ENCODE measurements at regions of chr19 and their contacts with region 1.

Region 1: DNA sequence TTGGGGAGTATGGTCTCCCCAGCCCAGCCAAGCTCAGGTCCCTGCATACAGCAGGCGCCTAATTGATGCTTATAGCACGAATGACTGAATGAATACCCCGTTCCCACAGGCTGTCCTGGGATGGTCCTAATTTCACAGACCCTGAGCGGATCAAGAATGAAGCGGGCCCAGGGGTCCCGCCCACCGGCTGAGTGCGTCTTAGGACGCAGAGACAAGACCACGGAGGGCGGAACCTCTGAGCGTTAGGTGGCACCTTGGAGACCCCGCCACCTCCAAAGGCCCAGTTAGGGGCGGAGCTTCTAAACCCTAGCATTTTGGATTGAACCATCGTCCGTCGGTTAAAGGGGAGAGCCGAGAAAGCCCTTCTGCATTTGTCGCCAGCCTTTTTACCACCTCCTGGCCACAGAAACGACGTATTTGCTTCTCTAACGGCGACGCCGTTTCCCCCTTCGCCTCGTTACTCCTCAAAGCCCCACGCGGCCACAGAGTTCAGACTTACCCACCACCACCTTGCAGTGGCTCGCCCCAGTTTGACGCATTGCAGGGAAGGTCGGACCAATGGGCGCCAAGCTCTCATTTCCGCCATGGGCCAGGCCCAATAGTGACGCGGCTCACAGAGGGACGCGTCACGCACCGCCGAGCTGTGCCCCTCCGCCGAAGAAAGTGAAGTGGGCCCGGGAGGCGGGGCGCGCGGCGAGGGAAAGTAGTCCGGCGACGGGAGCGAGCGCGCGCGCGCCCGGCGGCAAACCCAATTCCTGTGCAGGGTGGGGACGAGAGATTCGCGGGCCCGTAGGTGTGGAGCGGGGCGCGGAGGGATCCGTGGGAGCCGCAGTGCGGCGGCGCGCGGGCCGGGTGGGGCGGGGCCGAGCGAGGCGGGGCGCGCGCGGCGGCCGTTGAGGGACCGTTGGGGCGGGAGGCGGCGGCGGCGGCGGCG is 479 bp upstream of the CALM3 start:
- DNase-seq: peak; percentile 93 to 100 (median 98)
- ATAC-seq: peak; percentile 85
- H3K4me3 Mint-ChIP-seq: peak overlapping the region; percentile 95 to 100 (median 98)
- H3K27ac Mint-ChIP-seq: peak overlapping the region; percentile 100
- H3K4me1 Mint-ChIP-seq: peaks cover 22 to 60% (median 35%) of the 10 kb centered on the region in 4 donors
- H3K27me3 Mint-ChIP-seq: peaks cover 0 to 2% (median 0%) of the 10 kb centered on the region in 5 donors

Region 2: DNA sequence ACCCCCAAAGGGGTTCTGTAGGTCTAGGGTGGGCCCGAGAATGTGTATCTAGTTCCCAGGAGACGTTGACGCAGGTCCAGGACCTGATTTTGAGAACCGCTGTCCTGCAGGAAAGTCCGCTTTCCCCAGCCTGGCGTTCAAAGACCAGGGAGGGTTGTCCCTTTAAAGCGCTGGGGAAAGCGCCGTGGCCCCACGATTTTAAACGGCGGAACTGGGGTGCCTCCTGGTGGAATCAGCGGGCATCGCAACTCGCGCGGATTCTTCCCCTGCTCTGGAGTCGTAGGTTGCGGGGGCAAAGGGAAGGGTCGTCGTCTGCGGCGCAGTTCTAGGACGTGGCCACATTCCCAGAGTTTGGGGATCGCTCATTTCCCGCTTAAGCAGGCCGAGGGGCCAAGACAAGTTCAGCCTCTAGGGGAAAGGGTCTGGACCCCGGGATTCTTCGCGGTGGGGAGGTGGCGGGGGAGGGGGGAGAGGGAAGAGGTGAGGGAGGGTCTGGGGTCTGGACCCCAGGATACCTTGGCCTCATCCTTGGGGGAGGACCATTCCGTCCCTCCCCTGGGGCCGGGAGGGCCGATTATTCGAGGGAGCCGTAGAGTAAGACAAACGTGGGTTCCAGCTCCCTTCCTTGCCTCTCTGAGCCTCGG is 112.7 kb before region 1 on chr19:
- POLR2A ChIA-PET with region 1: no interaction called
- DNase-seq: peak; percentile 56 to 82 (median 74)
- ATAC-seq: peak; percentile 71 to 81
- H3K4me3 Mint-ChIP-seq: peak overlapping the region in 2 of 10 donors; percentile 31 to 47
- H3K27ac Mint-ChIP-seq: peak overlapping the region in 2 of 10 donors; percentile 19 to 57
- H3K4me1 Mint-ChIP-seq: peaks cover 15 to 57% (median 34%) of the 10 kb centered on the region in 4 donors
- H3K27me3 Mint-ChIP-seq: peaks cover 44 to 80% (median 62%) of the 10 kb centered on the region in 5 donors

Region 3: DNA sequence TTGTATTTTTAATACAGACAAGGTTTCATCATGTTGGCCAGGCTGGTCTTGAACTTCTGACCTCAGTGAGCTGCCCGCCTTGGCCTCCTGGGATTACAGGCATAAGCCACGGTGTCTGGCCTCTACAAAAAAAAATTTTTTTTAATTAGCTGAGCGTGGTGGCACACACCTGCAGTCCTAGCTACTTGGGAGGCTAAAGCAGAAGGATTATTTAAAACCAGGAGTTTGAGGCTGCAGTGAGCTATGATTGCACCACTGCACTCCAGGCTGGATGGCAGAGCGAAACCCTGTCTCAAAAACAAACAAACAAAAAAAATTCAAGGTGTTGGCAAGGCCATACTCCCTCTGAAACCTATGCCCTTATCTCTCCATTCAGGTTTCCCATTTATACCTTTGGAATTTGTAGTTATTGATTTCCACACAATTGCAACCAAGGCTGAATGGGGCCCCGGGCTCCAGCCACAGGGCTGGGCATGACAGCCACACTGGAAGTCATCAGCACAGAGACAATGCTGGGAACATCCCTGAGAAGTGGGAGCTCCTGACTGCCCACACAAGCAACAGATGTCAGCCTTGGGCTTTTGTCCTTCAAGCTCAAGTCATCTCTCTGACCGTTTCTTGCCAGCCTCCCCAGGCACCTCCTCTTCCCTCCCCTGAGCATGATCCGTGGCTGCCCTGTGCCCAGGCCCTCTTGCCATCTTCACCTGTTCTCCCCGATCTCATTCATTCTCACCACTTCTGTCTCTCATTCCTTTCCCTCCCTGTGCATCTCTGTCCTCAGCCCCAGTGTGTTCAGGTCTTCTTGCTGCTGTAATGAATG is 26.8 kb before region 1 on chr19:
- POLR2A ChIA-PET with region 1: no interaction called
- DNase-seq: no peak
- ATAC-seq: no peak
- H3K4me3 Mint-ChIP-seq: peak overlapping the region in 7 of 10 donors; percentile 16 to 76 (median 59)
- H3K27ac Mint-ChIP-seq: peak overlapping the region in 6 of 10 donors; percentile 11 to 89 (median 62)
- H3K4me1 Mint-ChIP-seq: peaks cover 17 to 30% (median 25%) of the 10 kb centered on the region in 4 donors
- H3K27me3 Mint-ChIP-seq: peaks cover 0 to 3% (median 0%) of the 10 kb centered on the region in 5 donors

Region 4: GRCh38 chr19:46610851-46611770 is 10.5 kb after region 1 on chr19:
- POLR2A ChIA-PET with region 1: interaction called, 145 read pairs
- DNase-seq: peak in 6 of 10 donors; percentile 30 to 56 (median 49)
- ATAC-seq: peak; percentile 56 to 64
- H3K4me3 Mint-ChIP-seq: peak overlapping the region; percentile 60 to 84 (median 76)
- H3K27ac Mint-ChIP-seq: peak overlapping the region; percentile 89 to 97 (median 94)
- H3K4me1 Mint-ChIP-seq: peaks cover 37 to 77% (median 66%) of the 10 kb centered on the region in 4 donors
- H3K27me3 Mint-ChIP-seq: no peaks in the 10 kb centered on the region

Region 5: DNA sequence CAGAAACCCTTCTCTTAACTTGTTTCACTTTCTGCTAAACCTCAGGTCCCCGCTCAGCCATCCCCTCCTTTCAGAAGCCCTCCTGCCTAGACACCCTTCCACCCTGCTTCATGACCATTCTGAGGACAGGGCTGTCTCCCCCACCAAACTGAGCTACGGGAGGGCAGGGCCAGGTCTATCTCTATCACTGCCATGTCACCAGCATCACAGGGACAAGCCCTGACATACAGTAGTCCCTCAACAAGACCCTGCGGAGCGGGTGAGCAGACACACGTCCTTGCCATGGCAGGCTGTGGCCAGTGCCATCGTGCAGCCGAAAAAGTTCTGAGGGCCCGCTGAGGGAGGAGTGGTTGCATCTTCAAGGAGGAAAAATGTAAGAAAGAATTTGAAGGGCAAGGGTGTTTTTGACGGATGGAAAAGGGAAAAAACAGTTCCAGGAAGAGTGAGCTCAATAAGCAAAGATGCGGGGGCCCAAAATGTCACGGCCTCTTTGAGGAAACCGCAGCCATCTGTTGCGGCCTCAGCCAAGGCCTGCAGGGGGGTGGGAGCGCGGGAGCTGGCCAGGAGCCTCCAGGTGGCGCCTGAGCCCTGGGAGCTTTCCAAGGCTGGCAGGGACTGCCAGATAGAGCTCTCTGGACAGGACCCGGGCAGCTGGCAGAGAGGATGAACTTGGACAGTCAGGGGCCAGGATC is 16.1 kb after region 1 on chr19:
- POLR2A ChIA-PET with region 1: interaction called, 145 read pairs
- DNase-seq: no peak
- ATAC-seq: no peak
- H3K4me3 Mint-ChIP-seq: peak overlapping the region; percentile 54 to 92 (median 80)
- H3K27ac Mint-ChIP-seq: peak overlapping the region; percentile 79 to 99 (median 95)
- H3K4me1 Mint-ChIP-seq: peaks cover 29 to 88% (median 74%) of the 10 kb centered on the region in 4 donors
- H3K27me3 Mint-ChIP-seq: no peaks in the 10 kb centered on the region

Region 6: GRCh38 chr19:46803555-46803954 is 202.9 kb after region 1 on chr19:
- POLR2A ChIA-PET with region 1: no interaction called
- DNase-seq: no peak
- ATAC-seq: no peak
- H3K4me3 Mint-ChIP-seq: no peak overlapping the region
- H3K27ac Mint-ChIP-seq: peak overlapping the region in 1 of 10 donors; percentile 5
- H3K4me1 Mint-ChIP-seq: no peaks in the 10 kb centered on the region
- H3K27me3 Mint-ChIP-seq: no peaks in the 10 kb centered on the region